ENCODE measurements at regions of chr15 and their contacts with region 1.

Region 1: GRCh38 chr15:99169769-99170311 is 65.0 kb downstream of the SYNM start:
- DNase-seq: peak in 1 of 2 donors; percentile 77
- H3K4me3 ChIP-seq: no peak overlapping the region
- H3K27ac ChIP-seq: peak overlapping the region; percentile 90 to 94
- H3K4me1 ChIP-seq: peaks cover 8 to 26% of the 10 kb centered on the region in 2 donors
- H3K27me3 ChIP-seq: no peaks in the 10 kb centered on the region
- CTCF ChIP-seq: no peak

Region 2: DNA sequence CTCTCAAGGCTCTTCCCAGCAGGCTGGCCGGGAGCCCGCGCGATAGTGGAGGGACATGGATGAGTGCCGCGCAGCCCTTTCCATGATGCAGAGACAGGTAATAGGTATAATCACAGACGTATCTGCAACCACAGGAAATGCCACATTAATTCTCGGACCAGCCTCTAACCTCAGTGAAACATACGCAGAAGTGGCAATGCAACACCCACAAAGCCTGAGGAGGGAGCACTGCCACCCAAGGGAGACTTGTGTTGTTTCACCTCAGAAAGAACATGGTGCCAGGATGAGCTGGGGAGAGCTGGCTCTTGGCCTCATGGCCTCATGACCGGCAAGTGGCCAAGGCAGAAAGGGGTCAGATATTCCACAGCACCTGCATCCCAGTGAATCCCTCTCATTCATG is 201.3 kb before region 1 on chr15:
- intact Hi-C with region 1: no loop called
- DNase-seq: no peak
- H3K4me3 ChIP-seq: no peak overlapping the region
- H3K27ac ChIP-seq: no peak overlapping the region
- H3K4me1 ChIP-seq: peaks cover 0 to 2% of the 10 kb centered on the region in 2 donors
- H3K27me3 ChIP-seq: no peaks in the 10 kb centered on the region
- CTCF ChIP-seq: no peak

Region 3: DNA sequence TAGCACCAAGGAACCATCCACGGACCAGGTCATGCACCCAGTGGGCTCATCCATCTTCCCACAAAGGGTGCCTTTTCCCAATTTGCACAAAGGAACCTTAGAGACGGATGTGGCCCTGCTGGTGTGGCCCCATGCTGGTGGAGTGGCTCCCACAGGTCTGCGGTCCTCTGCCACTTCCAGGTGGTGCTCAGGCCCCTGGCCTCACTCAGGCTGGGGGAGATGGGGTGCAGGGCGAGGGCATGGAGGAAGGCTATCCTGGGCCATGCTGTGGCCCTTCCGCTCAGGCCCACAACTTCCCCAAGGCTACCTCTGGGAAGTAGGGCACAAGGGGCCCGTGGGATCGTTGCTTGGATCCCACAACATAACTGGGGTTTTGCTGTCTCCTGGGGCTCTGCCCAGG is 70.2 kb before region 1 on chr15:
- intact Hi-C with region 1: no loop called
- DNase-seq: no peak
- H3K4me3 ChIP-seq: no peak overlapping the region
- H3K27ac ChIP-seq: no peak overlapping the region
- H3K4me1 ChIP-seq: peaks cover 0 to 4% of the 10 kb centered on the region in 2 donors
- H3K27me3 ChIP-seq: no peaks in the 10 kb centered on the region
- CTCF ChIP-seq: no peak

Region 4: DNA sequence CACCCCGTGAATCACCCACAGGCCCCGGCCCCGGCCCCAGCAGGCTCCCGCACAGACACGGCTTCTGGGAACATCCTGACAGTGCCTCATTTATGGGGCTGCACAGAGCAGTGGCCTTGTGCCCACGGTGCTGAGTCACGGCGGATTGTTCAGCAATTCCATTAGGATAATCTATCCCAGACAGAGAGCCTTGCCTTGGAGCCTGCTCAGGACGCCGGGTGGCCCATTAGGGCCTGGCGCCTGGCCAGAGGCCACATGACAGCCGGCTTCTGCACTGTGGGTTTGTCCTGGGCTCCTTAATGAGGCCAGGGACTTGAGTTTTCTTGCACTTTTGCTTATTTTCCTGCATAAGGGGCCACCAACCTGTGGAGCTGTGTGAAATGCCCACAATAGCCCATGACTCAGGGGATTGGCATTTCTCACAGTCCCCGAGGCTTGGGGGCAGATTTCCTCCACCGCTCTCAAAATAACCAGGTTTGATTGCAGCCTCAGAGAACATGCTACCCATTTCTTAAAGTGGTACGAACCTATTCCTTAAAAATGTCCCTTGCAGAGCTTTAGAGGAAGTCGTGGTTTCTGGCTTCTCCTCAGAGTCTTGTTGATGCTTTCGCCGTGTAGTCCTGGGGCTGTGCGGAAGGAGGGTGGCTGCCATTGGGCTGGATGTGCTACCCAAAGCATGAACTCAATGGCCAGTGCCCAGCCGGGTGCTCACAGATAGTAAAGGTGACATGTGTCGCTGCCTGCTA is 46.0 kb before region 1 on chr15:
- intact Hi-C with region 1: loop called (anchors 5 kb)
- DNase-seq: peak; percentile 64 to 96
- H3K4me3 ChIP-seq: peak overlapping the region; percentile 11 to 59
- H3K27ac ChIP-seq: peak overlapping the region; percentile 97 to 98
- H3K4me1 ChIP-seq: peaks cover 27 to 46% of the 10 kb centered on the region in 2 donors
- H3K27me3 ChIP-seq: no peaks in the 10 kb centered on the region
- CTCF ChIP-seq: no peak

Region 5: DNA sequence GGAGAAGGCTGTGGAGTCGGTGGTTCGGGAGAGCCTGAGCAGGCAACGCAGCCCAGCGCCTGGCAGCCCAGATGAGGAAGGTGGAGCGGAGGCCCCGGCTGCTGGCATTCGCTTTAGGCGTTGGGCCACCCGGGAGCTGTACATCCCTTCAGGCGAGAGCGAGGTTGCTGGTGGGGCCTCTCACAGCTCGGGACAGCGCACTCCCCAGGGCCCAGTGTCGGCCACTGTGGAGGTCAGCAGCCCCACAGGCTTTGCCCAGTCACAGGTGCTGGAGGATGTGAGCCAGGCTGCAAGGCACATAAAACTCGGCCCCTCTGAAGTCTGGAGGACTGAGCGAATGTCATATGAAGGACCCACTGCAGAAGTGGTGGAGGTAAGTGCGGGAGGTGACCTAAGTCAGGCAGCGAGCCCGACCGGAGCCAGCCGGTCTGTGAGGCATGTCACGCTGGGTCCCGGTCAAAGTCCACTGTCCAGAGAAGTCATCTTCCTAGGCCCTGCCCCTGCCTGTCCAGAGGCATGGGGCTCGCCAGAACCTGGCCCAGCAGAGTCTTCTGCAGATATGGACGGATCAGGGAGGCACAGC is 38.3 kb before region 1 on chr15:
- intact Hi-C with region 1: loop called (anchors 2 kb)
- DNase-seq: no peak
- H3K4me3 ChIP-seq: no peak overlapping the region
- H3K27ac ChIP-seq: no peak overlapping the region
- H3K4me1 ChIP-seq: peaks cover 0 to 4% of the 10 kb centered on the region in 2 donors
- H3K27me3 ChIP-seq: no peaks in the 10 kb centered on the region
- CTCF ChIP-seq: no peak

Region 6: DNA sequence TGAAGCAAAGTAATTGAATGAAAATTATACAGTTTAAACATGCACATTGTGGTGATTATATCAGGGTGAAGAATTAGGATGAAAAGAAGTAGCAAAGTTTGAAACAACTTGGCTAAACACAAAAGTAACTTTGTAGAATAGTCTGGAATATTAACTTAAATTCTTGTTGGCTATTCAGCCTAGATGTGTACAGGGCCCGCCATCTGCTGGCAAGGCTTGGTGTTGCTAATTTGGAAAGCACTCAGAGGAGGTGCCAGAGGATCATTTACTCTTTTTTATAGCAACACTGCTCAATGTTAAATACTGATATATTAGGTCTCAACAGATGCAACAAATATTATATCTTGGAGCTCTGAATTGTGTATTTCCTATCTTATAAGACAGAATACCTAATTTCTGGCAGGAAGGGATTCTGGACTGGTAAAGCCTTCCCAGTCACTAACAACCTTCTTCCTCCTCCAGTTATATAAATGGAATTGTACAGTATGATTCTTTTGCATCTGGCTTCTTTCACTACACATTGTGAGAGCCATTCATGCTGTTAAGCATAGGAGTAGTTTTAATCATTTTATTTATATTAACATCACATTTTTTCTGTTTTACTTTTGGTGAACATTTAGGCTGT is 43.5 kb after region 1 on chr15:
- intact Hi-C with region 1: loop called (anchors 1 kb)
- DNase-seq: peak; percentile 18 to 92
- H3K4me3 ChIP-seq: no peak overlapping the region
- H3K27ac ChIP-seq: no peak overlapping the region
- H3K4me1 ChIP-seq: no peaks in the 10 kb centered on the region
- H3K27me3 ChIP-seq: no peaks in the 10 kb centered on the region
- CTCF ChIP-seq: peak; percentile 76 to 88 (median 85)

Measured in ascending aorta (tissue), 2 donors.